Activated CD4-positive, alpha-beta memory T cell treated with anti-CD3 and anti-CD28 coated beads for 36 hours (primary cell): ENCODE measurements at regions of chr19 and their contacts with region 1.

Region 1: GRCh38 chr19:43526884-43527859 is at the start of gene ETHE1:
- DNase-seq: peak; percentile 85
- H3K4me3 Mint-ChIP-seq: peak within 1 kb of the TSS; percentile 92
- H3K27ac Mint-ChIP-seq: peak within 1 kb of the TSS; percentile 98
- H3K4me1 Mint-ChIP-seq: peaks cover 24% of the 10 kb centered on the region
- H3K27me3 Mint-ChIP-seq: no peaks in the 10 kb centered on the region
- total RNA-seq, gene ETHE1: 104 to 112 TPM

Region 2: GRCh38 chr19:43503501-43504425 is 23.4 kb before region 1 on chr19:
- CTCF ChIA-PET with region 1: interaction called, 5 read pairs
- POLR2A ChIA-PET with region 1: interaction called, 7 read pairs
- intact Hi-C with region 1: loop called (anchors 2 kb)
- DNase-seq: peak; percentile 99
- H3K4me3 Mint-ChIP-seq: peak overlapping the region; percentile 94
- H3K27ac Mint-ChIP-seq: peak overlapping the region; percentile 95
- H3K4me1 Mint-ChIP-seq: peaks cover 23% of the 10 kb centered on the region
- H3K27me3 Mint-ChIP-seq: no peaks in the 10 kb centered on the region

Region 3: GRCh38 chr19:43784981-43785808 is 258.0 kb after region 1 on chr19:
- CTCF ChIA-PET with region 1: no interaction called
- POLR2A ChIA-PET with region 1: no interaction called
- intact Hi-C with region 1: loop called (anchors 1 kb)
- DNase-seq: peak; percentile 70
- H3K4me3 Mint-ChIP-seq: peak overlapping the region; percentile 75
- H3K27ac Mint-ChIP-seq: peak overlapping the region; percentile 96
- H3K4me1 Mint-ChIP-seq: peaks cover 39% of the 10 kb centered on the region
- H3K27me3 Mint-ChIP-seq: peaks cover 1% of the 10 kb centered on the region